ENCODE measurements at regions of chr7 and their contacts with region 1.

Region 1: DNA sequence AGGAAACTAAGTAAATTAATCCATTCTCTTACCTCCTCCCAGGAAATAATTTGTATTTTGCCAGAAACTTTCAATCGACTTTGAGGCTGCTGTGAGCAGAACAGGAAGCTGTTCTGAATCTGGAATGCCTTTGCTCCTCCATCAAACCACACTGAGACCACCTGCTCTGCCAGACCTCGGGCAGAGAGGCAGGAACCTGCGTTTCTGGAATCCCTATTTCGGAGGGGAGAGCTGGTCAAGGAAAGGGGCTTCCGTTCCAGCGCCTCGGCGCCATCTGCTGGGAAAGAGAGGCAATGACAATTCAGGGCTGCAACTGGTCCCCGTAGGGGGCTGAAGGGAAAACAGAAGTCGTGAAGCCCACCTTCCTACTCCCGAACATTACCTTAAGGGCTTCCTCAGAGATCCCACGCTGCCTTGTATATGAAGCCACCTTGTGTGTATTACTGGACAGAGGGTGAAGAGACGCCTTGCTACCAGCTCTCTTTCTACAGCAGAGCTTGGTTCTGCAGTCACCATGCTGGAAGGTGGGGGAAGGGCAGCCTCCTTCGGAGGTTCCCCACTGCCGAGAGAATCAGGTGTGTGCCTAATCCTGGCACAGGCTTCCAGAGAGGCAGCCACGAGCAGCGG is 31.2 kb downstream of the ZNF467 start:
- H3K4me3 ChIP-seq: peak overlapping the region; percentile 46
- H3K27ac ChIP-seq: no peak overlapping the region
- H3K4me1 ChIP-seq: no peaks in the 10 kb centered on the region
- CTCF ChIP-seq: peak; percentile 75; the same call in 1 of the 2 replicates

Region 2: GRCh38 chr7:149670288-149670687 is 71.9 kb before region 1 on chr7:
- CTCF ChIA-PET with region 1: interaction called, 30 read pairs
- POLR2A ChIA-PET with region 1: no interaction called
- H3K4me3 ChIP-seq: no peak overlapping the region
- H3K27ac ChIP-seq: no peak overlapping the region
- H3K4me1 ChIP-seq: no peaks in the 10 kb centered on the region
- CTCF ChIP-seq: no peak

Region 3: DNA sequence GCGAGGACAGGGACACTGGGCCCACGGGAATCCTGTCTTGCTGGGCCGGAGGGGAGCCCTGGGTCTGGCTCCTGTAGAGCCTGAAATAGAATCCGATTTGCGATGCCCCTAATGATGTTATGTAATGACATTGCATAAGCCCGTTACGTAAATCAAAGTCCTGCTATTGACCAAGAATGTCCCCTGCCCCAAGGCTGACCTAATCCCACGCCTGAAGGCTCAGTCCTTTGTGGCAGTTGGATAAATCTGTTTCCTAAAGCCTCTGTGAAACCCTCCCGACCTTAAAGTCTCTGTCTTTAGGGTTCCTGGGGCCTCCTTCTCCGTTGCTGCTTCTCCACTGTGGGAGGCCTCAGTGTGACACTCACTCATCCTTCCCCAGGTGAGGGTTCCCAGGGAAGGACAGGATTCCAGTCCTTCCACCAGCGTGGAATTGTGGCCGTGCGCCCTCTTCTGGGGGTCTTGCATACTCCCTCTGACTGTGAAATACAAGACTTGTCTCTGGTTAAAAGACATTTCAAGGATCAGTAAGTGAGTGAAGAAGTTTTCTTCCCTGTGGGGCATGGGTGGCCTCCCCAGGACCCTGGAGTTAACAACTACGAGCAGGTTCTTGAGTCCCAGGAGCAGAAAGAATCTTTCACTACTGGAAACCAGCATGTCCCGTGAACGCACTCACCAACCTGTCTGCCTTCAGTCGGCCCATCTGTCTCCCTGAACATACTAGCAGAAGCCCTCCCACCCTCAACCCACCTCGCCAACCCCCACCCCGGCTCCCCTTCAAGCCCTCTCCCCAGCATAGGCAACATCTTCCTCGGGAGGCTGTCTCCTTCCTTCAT is 11.4 kb after region 1 on chr7:
- CTCF ChIA-PET with region 1: interaction called, 22 read pairs
- POLR2A ChIA-PET with region 1: no interaction called
- H3K4me3 ChIP-seq: no peak overlapping the region
- H3K27ac ChIP-seq: no peak overlapping the region
- H3K4me1 ChIP-seq: no peaks in the 10 kb centered on the region
- CTCF ChIP-seq: peak; percentile 61

Region 4: GRCh38 chr7:149759111-149759860 is 17.1 kb after region 1 on chr7:
- CTCF ChIA-PET with region 1: interaction called, 10 read pairs
- POLR2A ChIA-PET with region 1: interaction called, 3 read pairs
- H3K4me3 ChIP-seq: no peak overlapping the region
- H3K27ac ChIP-seq: no peak overlapping the region
- H3K4me1 ChIP-seq: no peaks in the 10 kb centered on the region
- CTCF ChIP-seq: no peak

Region 5: DNA sequence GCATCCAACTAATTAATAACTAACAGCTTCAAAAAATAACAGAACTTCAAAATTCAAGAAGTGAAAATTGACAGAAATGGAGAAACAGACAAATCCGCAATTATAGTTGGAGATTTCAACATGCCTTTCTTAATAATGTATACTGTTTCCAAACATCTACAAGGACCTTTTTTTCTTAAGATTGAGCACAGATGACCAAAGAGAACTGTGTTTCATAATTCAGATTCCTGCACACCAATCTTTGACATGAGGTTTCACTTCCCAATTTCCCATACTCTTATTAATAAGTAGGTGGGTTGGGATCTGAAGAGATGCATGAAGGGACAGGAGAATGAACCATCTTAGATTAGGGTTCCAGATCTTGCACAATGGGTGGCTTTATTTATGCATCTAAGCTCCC is 747.6 kb after region 1 on chr7:
- CTCF ChIA-PET with region 1: no interaction called
- POLR2A ChIA-PET with region 1: no interaction called
- H3K4me3 ChIP-seq: no peak overlapping the region
- H3K27ac ChIP-seq: no peak overlapping the region
- H3K4me1 ChIP-seq: no peaks in the 10 kb centered on the region
- CTCF ChIP-seq: no peak